Tibial artery (tissue), 4 donors: ENCODE measurements at regions of chr1 and their contacts with region 1.

Region 1: DNA sequence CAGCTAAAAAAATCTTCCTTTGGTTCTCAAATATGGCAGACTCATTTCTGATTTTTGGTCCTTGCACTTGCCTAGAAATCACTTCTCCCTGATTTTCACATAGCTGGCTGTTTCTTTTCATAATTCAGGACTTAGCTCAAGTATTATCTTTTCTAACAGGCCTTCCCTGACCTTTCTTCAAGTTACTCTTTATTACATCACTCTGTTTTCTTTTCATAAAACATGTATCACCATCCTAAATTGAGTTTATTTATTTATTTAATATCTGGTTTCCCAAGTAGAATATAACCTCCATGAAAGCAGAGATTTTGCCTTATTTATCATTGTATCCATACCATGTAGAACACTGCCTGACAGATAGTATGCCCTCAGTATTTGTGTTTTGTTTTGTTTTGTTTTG is 18.2 kb upstream of the GNG5 start:
- DNase-seq: no peak
- H3K4me3 ChIP-seq: no peak overlapping the region
- H3K27ac ChIP-seq: no peak overlapping the region
- H3K4me1 ChIP-seq: no peaks in the 10 kb centered on the region
- H3K27me3 ChIP-seq: no peaks in the 10 kb centered on the region
- CTCF ChIP-seq: no peak

Region 2: GRCh38 chr1:83682132-83682531 is 842.5 kb before region 1 on chr1:
- intact Hi-C with region 1: loop called (anchors 5 kb)
- DNase-seq: no peak
- H3K4me3 ChIP-seq: no peak overlapping the region
- H3K27ac ChIP-seq: no peak overlapping the region
- H3K4me1 ChIP-seq: no peaks in the 10 kb centered on the region
- H3K27me3 ChIP-seq: no peaks in the 10 kb centered on the region
- CTCF ChIP-seq: no peak

Region 3: GRCh38 chr1:84192681-84193080 is 331.9 kb before region 1 on chr1:
- intact Hi-C with region 1: no loop called
- DNase-seq: no peak
- H3K4me3 ChIP-seq: no peak overlapping the region
- H3K27ac ChIP-seq: no peak overlapping the region
- H3K4me1 ChIP-seq: no peaks in the 10 kb centered on the region
- H3K27me3 ChIP-seq: no peaks in the 10 kb centered on the region
- CTCF ChIP-seq: no peak

Region 4: DNA sequence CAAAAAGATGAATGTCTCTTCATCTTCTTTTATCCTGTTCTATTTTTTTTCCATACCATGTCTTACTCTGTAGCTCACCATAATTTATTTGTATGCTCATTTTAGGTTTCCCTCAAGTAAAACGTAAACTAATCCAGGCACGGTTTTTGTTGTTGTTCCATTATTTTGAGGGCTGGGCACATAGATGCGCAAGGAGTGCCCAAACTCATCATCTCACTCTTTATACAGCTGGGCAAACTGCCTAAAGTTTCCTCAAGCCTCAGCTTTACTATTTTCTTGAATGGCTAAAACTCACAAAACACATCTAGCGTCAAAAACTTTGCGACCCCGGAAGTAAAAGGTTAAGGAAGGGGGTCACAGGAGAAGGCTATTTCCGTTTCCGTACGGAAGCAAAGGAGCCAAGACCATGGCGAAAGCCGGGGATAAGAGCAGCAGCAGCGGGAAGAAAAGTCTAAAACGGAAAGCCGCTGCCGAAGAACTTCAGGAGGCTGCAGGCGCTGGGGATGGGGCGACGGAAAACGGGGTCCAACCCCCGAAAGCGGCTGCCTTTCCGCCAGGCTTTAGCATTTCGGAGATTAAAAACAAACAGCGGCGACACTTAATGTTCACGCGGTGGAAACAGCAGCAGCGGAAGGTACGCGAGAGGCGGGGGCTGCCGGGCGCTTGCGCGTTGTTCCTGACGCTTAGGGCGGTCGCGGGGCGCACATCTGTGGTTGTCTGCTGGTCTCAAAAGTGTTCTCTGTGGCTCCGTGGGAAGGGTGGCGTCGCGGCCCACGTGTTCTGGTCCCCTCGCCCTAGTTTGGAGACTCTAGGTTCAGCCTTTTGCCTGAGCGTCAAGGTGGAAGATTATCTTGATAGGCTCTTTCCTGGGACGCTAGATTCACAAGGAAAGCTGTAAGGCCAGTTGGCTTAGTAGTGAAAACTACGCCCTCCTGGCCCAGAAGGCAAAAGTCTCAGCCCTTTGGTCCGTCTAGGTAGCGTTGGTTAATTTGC is 45.4 kb before region 1 on chr1 and contains the start of gene RPF1:
- intact Hi-C with region 1: no loop called
- DNase-seq: peak; percentile 62 to 76
- H3K4me3 ChIP-seq: peak within 1 kb of the TSS; percentile 63 to 70
- H3K27ac ChIP-seq: peak within 1 kb of the TSS; percentile 73 to 79
- H3K4me1 ChIP-seq: peaks cover 0 to 28% (median 15%) of the 10 kb centered on the region in 4 donors
- H3K27me3 ChIP-seq: peaks cover 0 to 10% of the 10 kb centered on the region in 2 donors
- CTCF ChIP-seq: no peak

Region 5: GRCh38 chr1:84492726-84493125 is 31.9 kb before region 1 on chr1:
- intact Hi-C with region 1: no loop called
- DNase-seq: no peak
- H3K4me3 ChIP-seq: no peak overlapping the region
- H3K27ac ChIP-seq: no peak overlapping the region
- H3K4me1 ChIP-seq: no peaks in the 10 kb centered on the region
- H3K27me3 ChIP-seq: no peaks in the 10 kb centered on the region
- CTCF ChIP-seq: no peak

Region 6: GRCh38 chr1:84550826-84551225 is 26.2 kb after region 1 on chr1:
- intact Hi-C with region 1: no loop called
- DNase-seq: no peak
- H3K4me3 ChIP-seq: no peak overlapping the region
- H3K27ac ChIP-seq: no peak overlapping the region
- H3K4me1 ChIP-seq: no peaks in the 10 kb centered on the region
- H3K27me3 ChIP-seq: no peaks in the 10 kb centered on the region
- CTCF ChIP-seq: no peak